ENCODE measurements at regions of chr9 and their contacts with region 1.

Region 1: DNA sequence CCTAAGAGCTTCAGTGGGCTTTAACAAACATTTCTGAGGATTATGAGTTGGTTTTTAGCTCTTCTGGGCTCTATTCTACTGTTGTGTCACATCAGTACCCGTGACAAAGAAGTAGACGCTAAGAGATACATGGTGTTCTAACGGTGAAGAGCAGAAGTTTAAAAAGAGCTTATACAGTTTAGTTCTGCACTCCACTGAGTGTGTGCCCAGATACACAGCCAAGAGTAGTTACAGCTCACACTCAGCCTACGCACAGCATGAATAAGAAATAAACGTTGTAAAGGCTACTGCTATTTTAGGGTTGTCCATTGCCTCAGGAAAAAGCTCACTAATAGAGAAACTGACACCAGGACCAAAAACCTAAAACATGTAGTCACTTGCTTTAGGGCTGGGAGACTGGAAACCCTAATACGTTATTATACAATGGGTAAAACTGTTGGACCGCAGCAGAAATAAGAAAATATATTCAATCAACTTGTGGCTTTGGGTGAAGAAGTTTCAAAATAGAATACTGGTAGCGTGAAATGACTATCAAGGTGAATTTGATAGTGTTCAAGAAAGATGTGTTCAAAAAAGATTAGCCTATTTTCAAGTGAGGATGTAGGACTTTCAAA is 34.7 kb downstream of the PSIP1 start:
- DNase-seq: no peak
- H3K4me3 ChIP-seq: no peak overlapping the region
- H3K27ac ChIP-seq: no peak overlapping the region
- H3K4me1 ChIP-seq: no peaks in the 10 kb centered on the region
- H3K27me3 ChIP-seq: no peaks in the 10 kb centered on the region
- CTCF ChIP-seq: no peak
- POLR2A ChIP-seq: no peak

Region 2: GRCh38 chr9:14205463-14205862 is 1270.6 kb before region 1 on chr9:
- intact Hi-C with region 1: loop called (anchors 5 kb)
- DNase-seq: no peak
- H3K4me3 ChIP-seq: no peak overlapping the region
- H3K27ac ChIP-seq: no peak overlapping the region
- H3K4me1 ChIP-seq: peaks cover 19% of the 10 kb centered on the region
- H3K27me3 ChIP-seq: no peaks in the 10 kb centered on the region
- CTCF ChIP-seq: no peak
- POLR2A ChIP-seq: no peak

Region 3: DNA sequence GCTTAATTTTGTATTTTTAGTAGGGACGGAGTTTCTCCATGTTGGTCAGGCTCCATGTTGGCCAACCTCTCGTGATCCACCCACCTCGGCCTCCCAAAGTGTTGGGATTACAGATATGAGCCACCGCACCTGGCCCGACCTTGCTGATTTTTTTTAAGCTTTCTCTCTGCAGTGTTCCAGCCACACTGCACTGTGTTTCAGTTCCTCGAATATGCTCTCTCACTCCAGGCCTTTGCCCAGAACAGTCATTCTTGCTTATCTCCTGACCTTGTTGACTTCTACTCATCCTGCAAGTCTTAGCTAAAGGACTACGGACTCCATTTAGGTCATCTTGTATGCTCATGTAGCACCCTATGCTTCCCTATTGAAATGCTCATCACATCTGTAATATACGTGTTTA is 50.0 kb before region 1 on chr9:
- intact Hi-C with region 1: no loop called
- DNase-seq: no peak
- H3K4me3 ChIP-seq: no peak overlapping the region
- H3K27ac ChIP-seq: no peak overlapping the region
- H3K4me1 ChIP-seq: peaks cover 60% of the 10 kb centered on the region
- H3K27me3 ChIP-seq: no peaks in the 10 kb centered on the region
- CTCF ChIP-seq: no peak
- POLR2A ChIP-seq: no peak